ENCODE measurements at regions of chr15 and their contacts with region 1.

Region 1: GRCh38 chr15:72272213-72273002 is at the start of gene PARP6:
- DNase-seq: peak; percentile 97
- H3K4me3 ChIP-seq: peak within 1 kb of the TSS; percentile 81 to 89
- H3K27ac ChIP-seq: peak within 1 kb of the TSS; percentile 90 to 92
- H3K4me1 ChIP-seq: peaks cover 19% of the 10 kb centered on the region
- H3K27me3 ChIP-seq: no peaks in the 10 kb centered on the region
- CTCF ChIP-seq: peak; percentile 75 to 95 (median 90)
- POLR2A ChIP-seq: no peak
- total RNA-seq, gene PARP6: 114 to 182 TPM

Region 2: GRCh38 chr15:72220678-72221077 is 51.7 kb before region 1 on chr15:
- intact Hi-C with region 1: no loop called
- DNase-seq: no peak
- H3K4me3 ChIP-seq: no peak overlapping the region
- H3K27ac ChIP-seq: no peak overlapping the region
- H3K4me1 ChIP-seq: peaks cover 15% of the 10 kb centered on the region
- H3K27me3 ChIP-seq: no peaks in the 10 kb centered on the region
- CTCF ChIP-seq: no peak
- POLR2A ChIP-seq: no peak

Region 3: DNA sequence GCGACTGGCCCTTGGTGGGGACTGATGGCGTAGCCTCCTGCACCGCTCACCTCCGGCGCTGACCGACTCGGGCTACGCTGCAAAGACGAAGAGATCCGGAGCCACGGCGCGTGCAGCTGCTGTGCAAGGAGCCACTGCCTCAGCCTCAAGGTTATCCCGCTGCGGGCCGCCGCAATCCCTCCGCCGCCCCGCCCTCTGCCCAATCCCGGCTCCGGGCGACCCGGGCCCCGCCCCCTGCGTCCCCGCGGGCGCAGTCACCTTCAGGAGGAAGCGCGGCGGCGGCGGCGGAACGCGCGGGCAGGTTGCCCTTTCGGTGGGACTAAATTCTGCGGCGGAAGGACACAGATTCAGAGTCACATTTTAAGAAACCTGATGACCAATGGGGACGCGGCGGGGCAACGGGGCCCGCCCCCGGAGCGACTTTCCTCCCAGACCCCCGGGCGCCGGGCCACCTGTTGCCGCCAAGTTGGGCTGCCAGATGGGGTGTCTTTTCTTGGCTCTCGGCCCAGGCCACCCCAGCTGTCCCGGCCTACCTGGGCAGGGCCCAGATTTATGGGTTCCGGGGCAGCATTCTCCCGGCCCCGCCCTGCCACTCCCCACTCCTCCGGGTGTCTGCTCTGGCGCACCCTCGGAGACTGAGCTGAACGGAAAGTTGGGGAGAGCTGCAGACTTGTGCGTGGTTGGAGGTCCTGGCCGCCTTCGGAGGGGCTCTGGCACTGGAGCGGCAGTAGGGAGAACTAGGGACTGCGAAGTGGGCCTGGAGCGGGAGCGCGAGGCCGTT is 41.2 kb before region 1 on chr15 and contains the start of gene PKM:
- intact Hi-C with region 1: loop called (anchors 2 kb)
- DNase-seq: peak; percentile 98
- H3K4me3 ChIP-seq: peak within 1 kb of the TSS; percentile 84 to 93
- H3K27ac ChIP-seq: peak within 1 kb of the TSS; percentile 96
- H3K4me1 ChIP-seq: peaks cover 39% of the 10 kb centered on the region
- H3K27me3 ChIP-seq: no peaks in the 10 kb centered on the region
- CTCF ChIP-seq: no peak
- POLR2A ChIP-seq: peak; percentile 38
- total RNA-seq, gene PKM: 521 to 530 TPM